ENCODE measurements at regions of chr19 and their contacts with region 1.

Region 1: GRCh38 chr19:57682226-57682766 is 519 bp downstream of the ZNF551 start:
- DNase-seq: no peak
- ATAC-seq: no peak
- H3K4me3 Mint-ChIP-seq: peak overlapping the region; percentile 91
- H3K27ac Mint-ChIP-seq: peak overlapping the region; percentile 89
- H3K4me1 Mint-ChIP-seq: peaks cover 20% of the 10 kb centered on the region
- H3K27me3 Mint-ChIP-seq: peaks cover 34% of the 10 kb centered on the region
- CTCF ChIP-seq: no peak

Region 2: DNA sequence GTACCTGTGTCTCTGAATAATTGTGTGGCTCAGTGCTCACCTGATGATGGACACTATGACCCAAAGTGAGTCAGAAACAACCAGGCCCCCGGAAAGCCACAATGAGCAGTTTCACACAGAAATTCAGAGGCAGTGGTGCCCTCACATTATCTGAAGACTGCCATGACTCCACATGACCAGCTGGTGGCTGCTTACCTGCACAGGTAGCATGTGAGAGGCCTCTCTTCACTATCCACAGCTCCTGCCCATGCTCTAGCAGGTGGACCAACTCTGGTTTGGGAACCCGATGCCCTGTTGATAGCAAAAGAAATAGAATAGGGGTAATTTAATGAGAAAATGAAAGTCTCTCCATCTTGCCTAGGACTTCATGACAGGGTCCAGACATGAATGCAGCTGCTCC is 129.9 kb before region 1 on chr19:
- CTCF ChIA-PET with region 1: no interaction called
- POLR2A ChIA-PET with region 1: no interaction called
- DNase-seq: peak; percentile 12
- ATAC-seq: peak; percentile 65
- H3K4me3 Mint-ChIP-seq: no peak overlapping the region
- H3K27ac Mint-ChIP-seq: no peak overlapping the region
- H3K4me1 Mint-ChIP-seq: no peaks in the 10 kb centered on the region
- H3K27me3 Mint-ChIP-seq: no peaks in the 10 kb centered on the region
- CTCF ChIP-seq: no peak

Region 3: DNA sequence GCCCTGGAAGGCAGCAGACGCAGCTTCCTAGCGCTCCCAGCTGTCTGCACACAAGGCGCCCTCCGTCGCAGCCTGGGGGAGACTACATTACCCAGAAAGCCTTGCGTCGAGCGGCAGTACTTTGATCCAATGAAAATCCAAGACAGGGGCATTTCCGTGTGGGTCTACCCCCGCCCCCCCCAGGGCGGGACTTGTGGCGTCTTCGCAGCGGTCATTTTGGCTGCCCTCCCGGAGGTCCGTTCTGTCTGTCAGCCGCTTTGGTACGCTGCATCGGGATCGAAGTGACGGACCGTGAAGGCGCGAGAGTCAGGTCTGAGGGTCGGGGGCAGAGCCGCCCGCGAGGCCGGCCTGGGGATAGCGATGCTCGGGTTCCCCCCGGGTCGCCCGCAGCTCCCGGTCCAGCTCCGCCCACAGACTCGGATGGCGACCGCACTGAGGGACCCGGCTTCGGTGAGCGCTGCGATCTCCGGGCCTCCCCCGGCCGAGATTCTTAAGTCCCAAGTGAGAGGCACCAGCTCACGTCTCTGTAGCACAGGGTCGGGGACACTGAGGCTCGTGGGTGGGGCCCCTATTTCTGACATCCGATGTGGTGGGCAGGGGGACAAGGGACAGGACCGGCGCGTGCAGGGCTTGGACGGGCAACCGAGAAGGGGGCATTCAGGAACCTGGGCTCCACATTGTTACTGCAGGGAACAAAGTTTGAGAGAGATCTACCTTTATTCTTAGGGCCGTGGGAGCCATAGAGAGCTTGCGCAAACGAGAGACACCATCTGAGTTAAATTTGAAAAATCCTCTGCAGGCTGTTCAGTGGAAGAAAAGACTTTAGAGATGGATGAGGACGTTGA is 49.1 kb before region 1 on chr19 and contains the start of gene ZNF211:
- CTCF ChIA-PET with region 1: interaction called, 6 read pairs
- POLR2A ChIA-PET with region 1: interaction called, 10 read pairs
- DNase-seq: peak; percentile 94
- ATAC-seq: peak; percentile 97
- H3K4me3 Mint-ChIP-seq: peak within 1 kb of the TSS; percentile 96
- H3K27ac Mint-ChIP-seq: no peak within 1 kb of the TSS
- H3K4me1 Mint-ChIP-seq: peaks cover 16% of the 10 kb centered on the region
- H3K27me3 Mint-ChIP-seq: peaks cover 4% of the 10 kb centered on the region; the same call in 1 of the 2 replicates
- CTCF ChIP-seq: no peak
- total RNA-seq, gene ZNF211: 13.5 to 17.6 TPM (median 14.3 TPM) in 3 replicates

Region 4: GRCh38 chr19:57651654-57651996 is 30.7 kb before region 1 on chr19:
- CTCF ChIA-PET with region 1: interaction called, 22 read pairs
- POLR2A ChIA-PET with region 1: no interaction called
- DNase-seq: no peak
- ATAC-seq: peak; percentile 79
- H3K4me3 Mint-ChIP-seq: peak overlapping the region; percentile 59
- H3K27ac Mint-ChIP-seq: peak overlapping the region; percentile 61
- H3K4me1 Mint-ChIP-seq: peaks cover 14% of the 10 kb centered on the region
- H3K27me3 Mint-ChIP-seq: peaks cover 39% of the 10 kb centered on the region
- CTCF ChIP-seq: no peak

Region 5: GRCh38 chr19:57664269-57665127 is 17.8 kb before region 1 on chr19:
- CTCF ChIA-PET with region 1: interaction called, 19 read pairs
- POLR2A ChIA-PET with region 1: interaction called, 19 read pairs
- DNase-seq: peak; percentile 67
- ATAC-seq: peak; percentile 85
- H3K4me3 Mint-ChIP-seq: peak overlapping the region; percentile 86
- H3K27ac Mint-ChIP-seq: no peak overlapping the region
- H3K4me1 Mint-ChIP-seq: peaks cover 15% of the 10 kb centered on the region
- H3K27me3 Mint-ChIP-seq: peaks cover 20% of the 10 kb centered on the region
- CTCF ChIP-seq: no peak

Region 6: DNA sequence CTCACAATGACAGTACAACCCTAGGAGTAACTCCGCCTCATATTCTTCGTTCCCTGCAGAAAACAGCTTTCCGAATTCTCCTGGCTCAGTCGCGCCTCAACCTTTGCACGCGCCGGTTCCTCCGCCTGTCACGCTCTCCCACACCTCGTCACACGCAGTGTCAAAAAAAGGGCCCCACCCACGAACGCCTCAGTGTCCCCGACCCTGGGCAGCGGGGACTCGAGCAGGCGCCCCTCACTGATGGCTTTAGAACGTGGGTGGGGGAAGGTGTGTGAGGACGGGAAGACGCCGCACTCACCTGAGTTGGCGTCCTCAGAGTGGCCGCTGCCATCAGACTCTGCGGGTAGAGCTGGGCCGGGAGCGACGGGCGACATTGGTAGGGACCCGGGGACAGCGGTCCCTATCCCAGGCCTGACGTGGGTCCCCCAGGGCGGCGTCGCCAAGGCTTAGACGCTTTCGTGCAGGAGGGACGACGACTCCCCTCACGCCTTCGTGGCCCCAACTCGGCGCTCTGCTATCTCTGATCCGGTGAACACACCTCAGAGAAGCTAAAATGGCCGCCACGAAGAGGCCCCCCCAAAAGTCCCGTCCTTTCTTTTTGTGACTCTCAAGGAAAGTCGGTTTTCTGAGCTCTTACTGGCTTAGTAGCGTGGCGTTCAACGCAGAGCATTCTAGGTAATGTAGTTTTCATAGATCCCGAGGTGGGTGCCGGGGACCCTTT is 26.5 kb after region 1 on chr19 and contains the start of gene ZNF154:
- CTCF ChIA-PET with region 1: interaction called, 22 read pairs
- POLR2A ChIA-PET with region 1: interaction called, 14 read pairs
- DNase-seq: peak; percentile 78
- ATAC-seq: peak; percentile 97
- H3K4me3 Mint-ChIP-seq: peak within 1 kb of the TSS; percentile 100
- H3K27ac Mint-ChIP-seq: peak within 1 kb of the TSS; percentile 77
- H3K4me1 Mint-ChIP-seq: peaks cover 37% of the 10 kb centered on the region
- H3K27me3 Mint-ChIP-seq: 0 out of 2 replicates have a peak, but pooled peaks cover 6% of the 10 kb centered on the region
- CTCF ChIP-seq: no peak
- total RNA-seq, gene ZNF154: 20.0 to 22.0 TPM (median 21.4 TPM) in 3 replicates